ENCODE measurements at regions of chr3 and their contacts with region 1.

Region 1: DNA sequence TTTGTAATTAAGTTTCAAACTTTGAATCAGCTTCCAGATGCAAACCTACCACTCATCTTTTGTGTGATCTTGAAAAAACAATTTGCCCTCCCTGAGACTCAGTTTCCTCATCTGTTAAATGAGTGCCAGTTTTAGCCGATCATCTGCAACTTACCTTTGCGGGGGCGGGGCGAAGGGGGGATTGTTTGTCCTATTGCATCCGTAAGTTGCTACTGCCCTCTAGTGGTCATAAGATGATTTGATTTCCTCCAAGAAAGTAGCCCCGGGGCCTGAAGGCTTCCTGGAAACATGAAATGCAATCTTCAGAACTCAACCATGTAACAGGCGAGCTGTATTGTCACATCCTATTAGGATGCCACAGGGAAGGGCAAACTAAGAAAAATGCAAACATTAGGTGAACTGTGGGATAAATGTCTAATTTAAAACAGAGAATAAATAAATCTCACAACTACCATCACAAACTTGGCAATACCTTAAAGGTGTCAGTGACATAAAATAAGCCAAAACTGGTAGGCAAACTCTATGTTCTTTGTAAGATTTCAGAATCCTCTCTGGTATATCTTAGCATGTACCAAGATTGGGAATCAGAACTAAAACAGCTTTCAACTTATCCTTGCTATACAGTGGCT is 63.5 kb upstream of the CLDN18 start:
- DNase-seq: peak; percentile 84
- H3K4me3 Mint-ChIP-seq: no peak overlapping the region
- H3K27ac Mint-ChIP-seq: no peak overlapping the region
- H3K4me1 Mint-ChIP-seq: peaks cover 7% of the 10 kb centered on the region
- H3K27me3 Mint-ChIP-seq: peaks cover 32% of the 10 kb centered on the region
- CTCF ChIP-seq: peak; percentile 89

Region 2: GRCh38 chr3:137032465-137033120 is 913.9 kb before region 1 on chr3:
- CTCF ChIA-PET with region 1: no interaction called
- intact Hi-C with region 1: loop called (anchors 2 kb)
- DNase-seq: peak; percentile 98
- H3K4me3 Mint-ChIP-seq: peak overlapping the region; percentile 66
- H3K27ac Mint-ChIP-seq: no peak overlapping the region
- H3K4me1 Mint-ChIP-seq: peaks cover 17% of the 10 kb centered on the region
- H3K27me3 Mint-ChIP-seq: peaks cover 7% of the 10 kb centered on the region
- CTCF ChIP-seq: peak; percentile 99

Region 3: GRCh38 chr3:137231126-137231525 is 715.3 kb before region 1 on chr3:
- CTCF ChIA-PET with region 1: no interaction called
- intact Hi-C with region 1: loop called (anchors 10 kb)
- DNase-seq: no peak
- H3K4me3 Mint-ChIP-seq: no peak overlapping the region
- H3K27ac Mint-ChIP-seq: no peak overlapping the region
- H3K4me1 Mint-ChIP-seq: no peaks in the 10 kb centered on the region
- H3K27me3 Mint-ChIP-seq: peaks cover 63% of the 10 kb centered on the region
- CTCF ChIP-seq: no peak

Region 4: GRCh38 chr3:137709011-137709601 is 237.4 kb before region 1 on chr3:
- CTCF ChIA-PET with region 1: interaction called, 10 read pairs
- intact Hi-C with region 1: loop called (anchors 1 kb)
- DNase-seq: peak; percentile 52
- H3K4me3 Mint-ChIP-seq: no peak overlapping the region
- H3K27ac Mint-ChIP-seq: no peak overlapping the region
- H3K4me1 Mint-ChIP-seq: no peaks in the 10 kb centered on the region
- H3K27me3 Mint-ChIP-seq: peaks cover 17% of the 10 kb centered on the region
- CTCF ChIP-seq: peak; percentile 47

Region 5: GRCh38 chr3:137792626-137793271 is 153.7 kb before region 1 on chr3:
- CTCF ChIA-PET with region 1: no interaction called
- intact Hi-C with region 1: loop called (anchors 10 kb)
- DNase-seq: peak; percentile 51
- H3K4me3 Mint-ChIP-seq: no peak overlapping the region
- H3K27ac Mint-ChIP-seq: no peak overlapping the region
- H3K4me1 Mint-ChIP-seq: no peaks in the 10 kb centered on the region
- H3K27me3 Mint-ChIP-seq: peaks cover 2% of the 10 kb centered on the region
- CTCF ChIP-seq: peak; percentile 37

Region 6: GRCh38 chr3:137970914-137971831 is 24.7 kb after region 1 on chr3:
- CTCF ChIA-PET with region 1: interaction called, 3 read pairs
- intact Hi-C with region 1: loop called (anchors 1 kb)
- DNase-seq: peak; percentile 96
- H3K4me3 Mint-ChIP-seq: peak overlapping the region; percentile 33
- H3K27ac Mint-ChIP-seq: peak overlapping the region; percentile 14
- H3K4me1 Mint-ChIP-seq: peaks cover 6% of the 10 kb centered on the region
- H3K27me3 Mint-ChIP-seq: no peaks in the 10 kb centered on the region
- CTCF ChIP-seq: peak; percentile 97

Region 7: GRCh38 chr3:138068579-138069174 is 122.2 kb after region 1 on chr3:
- CTCF ChIA-PET with region 1: no interaction called
- intact Hi-C with region 1: no loop called
- DNase-seq: peak; percentile 90
- H3K4me3 Mint-ChIP-seq: no peak overlapping the region
- H3K27ac Mint-ChIP-seq: no peak overlapping the region
- H3K4me1 Mint-ChIP-seq: no peaks in the 10 kb centered on the region
- H3K27me3 Mint-ChIP-seq: no peaks in the 10 kb centered on the region
- CTCF ChIP-seq: peak; percentile 98

Region 8: DNA sequence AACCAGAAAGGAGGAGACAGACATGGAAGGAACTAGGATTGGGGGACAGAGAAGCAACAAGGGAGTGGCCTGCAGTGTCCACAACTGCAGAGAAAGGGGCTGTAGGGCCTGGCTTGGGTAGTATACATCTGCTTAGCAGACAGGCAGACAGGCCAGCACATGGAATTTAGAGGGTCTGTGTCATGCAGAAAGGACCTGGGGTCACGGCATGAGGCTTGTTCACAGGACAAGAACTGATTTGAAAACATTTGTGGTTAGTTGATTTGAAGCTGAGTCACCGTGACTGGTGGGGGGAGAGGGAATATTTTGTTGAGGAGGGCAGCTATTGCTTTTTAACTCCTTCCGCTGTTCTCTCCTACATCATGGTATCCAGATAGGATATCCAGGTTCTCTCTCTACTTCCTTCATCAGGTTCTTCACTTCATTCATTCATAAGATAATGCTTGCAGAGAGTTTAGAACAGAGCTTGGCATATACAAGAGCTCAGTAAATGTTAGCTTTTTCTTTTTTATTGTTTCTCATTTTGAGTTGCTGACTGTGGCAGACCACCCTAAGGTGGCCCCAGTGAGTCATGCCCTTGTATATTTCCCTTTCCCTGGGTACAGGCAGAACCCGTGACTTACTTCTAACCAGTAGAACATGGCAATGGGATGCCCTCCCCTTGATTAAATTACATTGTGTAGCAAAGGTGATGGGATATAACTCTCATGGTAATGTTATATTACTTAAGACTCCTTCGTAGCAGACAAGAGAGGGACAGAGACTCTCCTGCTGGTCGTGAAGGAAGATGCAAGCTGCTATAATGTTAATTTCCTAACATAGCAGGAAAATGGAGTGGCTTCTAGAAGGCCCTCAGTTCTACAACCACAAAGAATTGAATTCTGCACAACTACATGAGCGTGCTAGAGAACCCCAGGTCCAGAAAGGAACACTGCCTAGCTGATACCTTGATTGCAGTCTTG is 1826.4 kb after region 1 on chr3:
- CTCF ChIA-PET with region 1: no interaction called
- intact Hi-C with region 1: no loop called
- DNase-seq: peak; percentile 21
- H3K4me3 Mint-ChIP-seq: no peak overlapping the region
- H3K27ac Mint-ChIP-seq: no peak overlapping the region
- H3K4me1 Mint-ChIP-seq: peaks cover 13% of the 10 kb centered on the region
- H3K27me3 Mint-ChIP-seq: peaks cover 17% of the 10 kb centered on the region
- CTCF ChIP-seq: no peak

Measured in Calu3 (cell line).